Cardiac septum (tissue), 1 donor: ENCODE measurements at regions of chrX and their contacts with region 1.

Region 1: GRCh38 chrX:133792198-133792953 is 193.0 kb downstream of the GPC3 start:
- DNase-seq: no peak

Region 2: DNA sequence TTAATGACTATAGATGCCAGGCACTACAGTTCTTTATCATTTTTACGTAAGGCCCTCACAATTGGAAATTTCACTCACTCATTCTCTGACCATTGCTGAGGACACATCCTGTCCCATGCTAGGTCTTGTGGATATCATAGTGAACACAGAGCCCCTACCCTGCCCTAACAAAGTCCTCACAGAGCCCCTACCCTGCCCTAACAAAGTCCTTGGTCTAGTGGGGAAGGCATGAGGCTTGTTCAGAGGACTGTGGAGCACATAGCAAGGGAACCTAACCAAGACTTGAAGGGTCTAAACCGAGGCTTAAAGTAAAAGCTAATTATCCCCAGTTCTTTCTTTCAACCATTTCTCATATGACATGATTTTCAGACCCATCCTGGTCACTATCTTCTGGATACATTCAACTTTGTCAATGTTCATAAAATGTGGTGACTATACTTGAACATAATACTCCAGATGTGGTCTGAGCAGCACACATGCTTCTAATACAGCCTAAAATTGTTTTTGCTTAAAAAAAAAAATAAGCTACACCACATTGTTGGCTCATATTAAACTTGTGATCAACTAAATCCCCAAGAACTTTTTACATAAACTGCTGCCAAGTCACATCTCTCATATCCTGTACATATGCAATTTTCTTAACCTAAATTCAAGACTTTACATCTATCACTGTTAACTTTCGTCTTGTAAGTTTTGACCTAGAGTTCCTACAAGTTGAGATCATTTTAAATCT is 116.0 kb after region 1 on chrX:
- intact Hi-C with region 1: no loop called
- DNase-seq: no peak

Region 3: GRCh38 chrX:133921764-133922389 is 129.5 kb after region 1 on chrX:
- intact Hi-C with region 1: loop called (anchors 5 kb)
- DNase-seq: no peak

Region 4: DNA sequence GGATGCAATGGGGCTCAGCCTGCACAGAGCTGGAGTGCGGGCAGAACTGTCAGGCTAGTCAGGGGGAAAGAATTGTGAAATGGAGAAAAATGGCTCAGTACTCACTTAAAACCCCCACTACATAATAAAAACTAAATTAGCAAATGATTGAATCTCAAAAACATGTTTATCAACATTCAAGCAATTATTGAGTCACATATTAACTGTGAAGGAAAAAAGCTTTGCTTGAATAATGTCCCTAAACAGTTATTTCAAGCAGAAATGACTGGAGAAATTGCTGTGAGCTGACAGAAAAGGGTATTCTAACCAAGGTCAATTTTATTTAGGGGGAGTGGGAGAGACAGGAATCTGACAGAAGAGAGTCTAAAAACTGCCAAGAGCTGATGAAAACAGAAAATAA is 155.6 kb after region 1 on chrX:
- intact Hi-C with region 1: no loop called
- DNase-seq: no peak